Dendritic cell treated with granulocyte-macrophage colony-stimulating factor and Interleukin-4, amounts not matched to agents 40 ng/mL and 50 ng/mL, for 4 days (primary cell): ENCODE measurements at regions of chr18 and their contacts with region 1.

Region 1: DNA sequence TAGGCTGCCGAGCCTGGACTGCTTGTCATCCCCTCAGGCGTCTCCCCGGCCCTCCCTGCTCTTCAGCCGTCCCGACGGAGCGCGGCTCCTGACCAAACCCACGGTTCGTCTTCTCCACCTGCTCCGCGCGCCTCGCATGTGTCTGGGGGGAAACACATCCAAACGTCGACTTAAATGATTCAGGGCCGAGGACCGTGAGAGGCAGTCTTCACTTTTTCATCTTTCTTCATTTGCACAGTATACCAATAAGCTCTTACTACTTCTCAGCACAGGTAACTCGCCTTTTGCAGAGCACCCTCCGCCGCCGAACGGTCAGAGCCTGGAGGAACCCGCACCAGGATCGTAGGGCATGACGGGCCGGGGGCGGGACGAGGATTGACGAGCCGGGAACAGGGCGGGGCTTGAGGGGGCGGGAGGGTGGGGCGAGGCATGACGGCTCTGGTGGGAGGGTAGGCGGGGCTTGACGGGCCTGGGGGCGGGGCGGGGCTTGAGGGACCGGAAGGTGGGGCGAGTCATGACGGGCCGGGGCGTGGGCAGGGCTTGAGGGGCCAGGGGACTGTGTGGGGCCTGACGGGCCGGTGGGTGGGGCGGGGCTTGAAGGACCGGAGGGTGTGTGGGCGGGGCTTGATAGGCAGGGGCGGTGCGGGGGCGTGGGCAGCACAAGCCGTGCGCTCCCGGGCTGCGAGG is at the start of gene SEH1L:
- H3K4me3 Mint-ChIP-seq: peak within 1 kb of the TSS; percentile 97
- H3K27ac Mint-ChIP-seq: peak within 1 kb of the TSS; percentile 96
- H3K4me1 Mint-ChIP-seq: peaks cover 41% of the 10 kb centered on the region
- H3K27me3 Mint-ChIP-seq: no peaks in the 10 kb centered on the region

Region 2: GRCh38 chr18:12376718-12377555 is 570.6 kb before region 1 on chr18 and contains the start of gene AFG3L2:
- intact Hi-C with region 1: loop called (anchors 1 kb)
- H3K4me3 Mint-ChIP-seq: peak within 1 kb of the TSS; percentile 80
- H3K27ac Mint-ChIP-seq: peak within 1 kb of the TSS; percentile 87
- H3K4me1 Mint-ChIP-seq: peaks cover 54% of the 10 kb centered on the region
- H3K27me3 Mint-ChIP-seq: no peaks in the 10 kb centered on the region

Region 3: GRCh38 chr18:12702221-12703095 is 245.0 kb before region 1 on chr18 and contains the starts of genes CEP76 and PSMG2:
- intact Hi-C with region 1: loop called (anchors 1 kb)
- H3K4me3 Mint-ChIP-seq: peak within 1 kb of the TSS; percentile 89
- H3K27ac Mint-ChIP-seq: peak within 1 kb of the TSS; percentile 100
- H3K4me1 Mint-ChIP-seq: peaks cover 37% of the 10 kb centered on the region
- H3K27me3 Mint-ChIP-seq: no peaks in the 10 kb centered on the region

Region 4: GRCh38 chr18:12838178-12838634 is 109.3 kb before region 1 on chr18:
- intact Hi-C with region 1: loop called (anchors 2 kb)
- H3K4me3 Mint-ChIP-seq: peak overlapping the region; percentile 58
- H3K27ac Mint-ChIP-seq: peak overlapping the region; percentile 97
- H3K4me1 Mint-ChIP-seq: peaks cover 69% of the 10 kb centered on the region
- H3K27me3 Mint-ChIP-seq: no peaks in the 10 kb centered on the region

Region 5: DNA sequence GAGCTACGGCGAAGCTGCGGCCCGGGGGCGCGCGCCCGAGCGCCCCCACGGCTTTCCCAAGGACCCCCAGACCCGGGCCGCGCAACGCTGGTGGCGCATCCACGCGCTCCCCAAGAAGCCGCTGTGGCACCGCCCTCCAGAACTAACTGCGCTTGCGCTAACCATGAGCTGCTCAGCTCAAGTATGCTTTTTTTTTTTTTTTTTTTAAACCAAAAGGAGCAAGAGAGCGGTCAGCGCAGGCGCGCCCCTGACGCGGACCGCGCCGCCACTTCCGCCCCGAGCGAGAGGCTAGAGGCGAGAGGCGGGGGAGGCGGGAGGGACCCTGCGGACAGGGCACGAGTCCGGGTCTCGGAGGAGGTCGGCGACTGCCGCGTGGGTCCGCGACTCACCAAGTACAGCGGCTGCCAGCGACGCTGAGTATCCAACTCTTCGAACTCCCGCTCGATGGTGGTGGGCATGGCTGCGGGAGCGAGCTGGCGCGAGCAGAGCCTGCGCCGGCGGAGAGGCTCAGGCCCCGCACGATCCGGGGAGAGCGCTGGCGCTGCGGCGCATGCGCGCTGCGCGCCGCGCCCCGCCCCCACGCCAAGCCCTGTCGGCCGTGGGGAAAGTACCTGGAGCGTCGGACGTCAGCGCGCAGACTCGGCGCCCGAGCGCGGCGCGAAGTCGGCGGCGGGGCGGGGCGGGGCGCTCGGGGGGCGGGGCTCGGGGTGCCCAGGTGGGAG is 63.7 kb before region 1 on chr18 and contains the start of gene PTPN2:
- intact Hi-C with region 1: loop called (anchors 5 kb)
- H3K4me3 Mint-ChIP-seq: peak within 1 kb of the TSS; percentile 90
- H3K27ac Mint-ChIP-seq: peak within 1 kb of the TSS; percentile 89
- H3K4me1 Mint-ChIP-seq: peaks cover 40% of the 10 kb centered on the region
- H3K27me3 Mint-ChIP-seq: no peaks in the 10 kb centered on the region

Region 6: GRCh38 chr18:12990967-12991838 is 43.7 kb after region 1 on chr18 and contains the start of gene CEP192:
- intact Hi-C with region 1: loop called (anchors 1 kb)
- H3K4me3 Mint-ChIP-seq: peak within 1 kb of the TSS; percentile 93
- H3K27ac Mint-ChIP-seq: peak within 1 kb of the TSS; percentile 87
- H3K4me1 Mint-ChIP-seq: peaks cover 16% of the 10 kb centered on the region
- H3K27me3 Mint-ChIP-seq: no peaks in the 10 kb centered on the region